ENCODE measurements at regions of chr11 and their contacts with region 1.

Region 1: GRCh38 chr11:73307323-73308002 is 613 bp upstream of the ARHGEF17 start:
- DNase-seq: peak; percentile 84
- ATAC-seq: peak; percentile 82
- H3K4me3 ChIP-seq: peak overlapping the region; percentile 79 to 91
- H3K27ac ChIP-seq: peak overlapping the region; percentile 81
- H3K4me1 ChIP-seq: peaks cover 31% of the 10 kb centered on the region
- H3K27me3 ChIP-seq: no peaks in the 10 kb centered on the region
- CTCF ChIP-seq: peak; percentile 93; the same call in 1 of the 2 replicates

Region 2: GRCh38 chr11:73335204-73335923 is 27.9 kb after region 1 on chr11:
- CTCF ChIA-PET with region 1: interaction called, 55 read pairs
- POLR2A ChIA-PET with region 1: interaction called, 21 read pairs
- in situ Hi-C with region 1: no loop called
- intact Hi-C with region 1: loop called (anchors 1 kb)
- DNase-seq: peak; percentile 77
- ATAC-seq: peak; percentile 70
- H3K4me3 ChIP-seq: no peak overlapping the region
- H3K27ac ChIP-seq: peak overlapping the region; percentile 55
- H3K4me1 ChIP-seq: peaks cover 39% of the 10 kb centered on the region
- H3K27me3 ChIP-seq: no peaks in the 10 kb centered on the region
- CTCF ChIP-seq: peak; percentile 100

Region 3: DNA sequence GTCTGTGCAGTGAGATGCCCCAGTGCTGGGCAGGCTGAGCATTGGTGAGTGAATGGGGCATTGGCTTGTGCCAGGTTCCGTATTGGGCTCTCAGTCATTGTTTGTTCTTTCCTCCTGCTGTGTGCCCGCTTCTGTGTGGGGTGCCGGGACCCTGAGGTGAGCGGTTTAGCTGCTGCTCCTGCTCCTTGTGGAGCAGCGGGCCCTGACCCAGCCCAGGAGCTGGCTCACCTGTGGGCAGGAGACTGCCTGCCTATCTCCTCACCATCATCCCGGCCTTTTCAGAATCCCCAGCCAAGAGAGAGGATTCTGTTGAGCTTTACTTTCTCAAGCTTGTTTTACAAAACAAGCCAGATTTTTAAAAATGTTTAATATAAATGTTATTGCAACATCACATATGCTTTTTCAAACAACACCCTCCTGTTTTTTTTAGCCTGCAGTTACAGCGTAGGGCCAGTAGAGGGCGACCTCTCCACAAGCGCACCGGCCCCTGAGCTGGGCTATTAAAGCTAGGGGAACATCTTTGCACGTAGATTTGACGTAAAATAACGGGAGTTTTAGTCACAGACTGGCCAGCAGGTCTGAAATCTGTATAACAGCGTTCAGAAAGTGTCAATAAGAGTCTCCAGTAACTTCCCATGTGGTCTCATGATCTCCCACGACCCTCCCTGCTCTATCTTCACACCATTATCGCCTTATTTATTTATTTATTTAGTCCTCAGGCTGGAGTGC is 43.6 kb after region 1 on chr11:
- CTCF ChIA-PET with region 1: interaction called, 14 read pairs
- POLR2A ChIA-PET with region 1: no interaction called
- in situ Hi-C with region 1: no loop called
- intact Hi-C with region 1: no loop called
- DNase-seq: peak; percentile 48
- ATAC-seq: peak; percentile 78
- H3K4me3 ChIP-seq: peak overlapping the region in 1 of 2 experiments; percentile 2; a peak in 1 of 4 replicates
- H3K27ac ChIP-seq: no peak overlapping the region
- H3K4me1 ChIP-seq: peaks cover 3% of the 10 kb centered on the region; the same call in 1 of the 2 replicates
- H3K27me3 ChIP-seq: no peaks in the 10 kb centered on the region
- CTCF ChIP-seq: peak; percentile 100

Region 4: GRCh38 chr11:73393479-73394380 is 86.3 kb after region 1 on chr11:
- CTCF ChIA-PET with region 1: interaction called, 6 read pairs
- POLR2A ChIA-PET with region 1: no interaction called
- in situ Hi-C with region 1: no loop called
- intact Hi-C with region 1: loop called (anchors 10 kb)
- DNase-seq: peak; percentile 47
- ATAC-seq: peak; percentile 89
- H3K4me3 ChIP-seq: no peak overlapping the region
- H3K27ac ChIP-seq: no peak overlapping the region; the same call in 1 of the 2 replicates
- H3K4me1 ChIP-seq: no peaks in the 10 kb centered on the region
- H3K27me3 ChIP-seq: no peaks in the 10 kb centered on the region
- CTCF ChIP-seq: peak; percentile 93